ENCODE measurements at regions of chr1 and their contacts with region 1.

Region 1: DNA sequence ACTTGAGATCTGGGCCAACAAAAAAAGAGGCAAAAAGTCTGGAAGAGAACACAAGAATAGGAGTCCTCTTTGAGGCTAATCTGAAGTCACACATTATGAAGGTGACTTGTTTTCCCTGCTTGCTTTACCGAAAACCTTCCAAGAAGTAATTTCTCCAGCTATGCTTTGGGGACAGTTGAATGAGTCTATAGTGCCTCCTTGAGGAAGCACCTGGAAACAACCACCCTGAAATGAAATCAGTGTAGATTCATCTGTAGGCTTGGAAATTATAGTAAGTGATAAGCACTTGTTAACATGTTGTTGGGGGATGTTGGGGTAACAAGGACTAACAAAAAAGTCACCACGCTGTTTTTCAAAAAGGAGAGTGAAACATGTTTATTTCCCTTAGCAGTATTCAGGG is 23.4 kb upstream of the RPTN start:
- DNase-seq: no peak
- H3K4me3 ChIP-seq: no peak overlapping the region
- H3K4me3 Mint-ChIP-seq: no peak overlapping the region
- H3K27ac ChIP-seq: no peak overlapping the region
- H3K27ac Mint-ChIP-seq: no peak overlapping the region
- H3K4me1 ChIP-seq: no peaks in the 10 kb centered on the region
- H3K4me1 Mint-ChIP-seq: peaks cover 0 to 2% (median under 1%) of the 10 kb centered on the region in 4 donors
- H3K27me3 ChIP-seq: no peaks in the 10 kb centered on the region
- H3K27me3 Mint-ChIP-seq: peaks cover 0 to 6% of the 10 kb centered on the region in 2 donors

Region 2: GRCh38 chr1:151072224-151072623 is 1110.2 kb before region 1 on chr1:
- CTCF ChIA-PET with region 1: no interaction called
- POLR2A ChIA-PET with region 1: no interaction called
- intact Hi-C with region 1: no loop called
- DNase-seq: no peak
- H3K4me3 ChIP-seq: no peak overlapping the region
- H3K4me3 Mint-ChIP-seq: peak overlapping the region in 6 of 8 donors; percentile 95 to 100 (median 98)
- H3K27ac ChIP-seq: peak overlapping the region; percentile 97
- H3K27ac Mint-ChIP-seq: peak overlapping the region in 5 of 7 donors; percentile 10 to 100 (median 99)
- H3K4me1 ChIP-seq: peaks cover 17% of the 10 kb centered on the region
- H3K4me1 Mint-ChIP-seq: peaks cover 13 to 34% (median 25%) of the 10 kb centered on the region in 4 donors
- H3K27me3 ChIP-seq: no peaks in the 10 kb centered on the region
- H3K27me3 Mint-ChIP-seq: no peaks in the 10 kb centered on the region

Region 3: DNA sequence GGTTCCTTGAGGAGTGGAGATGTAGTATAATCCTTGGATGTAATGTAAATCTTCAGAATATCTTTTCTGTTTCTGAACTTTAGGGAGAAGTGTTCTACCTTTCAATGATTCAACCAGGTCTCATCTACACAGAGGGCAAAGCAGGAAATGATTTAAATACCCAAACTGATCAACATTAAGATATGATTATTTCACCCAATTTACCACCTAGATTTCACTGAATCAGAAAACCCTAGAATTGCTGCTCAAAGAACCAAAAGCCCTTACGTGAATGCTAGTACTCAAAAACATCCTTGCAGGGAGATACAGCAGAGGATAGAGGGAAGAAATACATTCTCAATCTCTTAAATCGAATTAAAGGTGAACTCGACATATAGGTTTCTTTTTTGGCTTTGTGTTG is 28.4 kb before region 1 on chr1:
- CTCF ChIA-PET with region 1: interaction called, 9 read pairs
- POLR2A ChIA-PET with region 1: no interaction called
- intact Hi-C with region 1: loop called (anchors 1 kb)
- DNase-seq: no peak
- H3K4me3 ChIP-seq: no peak overlapping the region
- H3K4me3 Mint-ChIP-seq: no peak overlapping the region
- H3K27ac ChIP-seq: no peak overlapping the region
- H3K27ac Mint-ChIP-seq: no peak overlapping the region
- H3K4me1 ChIP-seq: peaks cover 7% of the 10 kb centered on the region
- H3K4me1 Mint-ChIP-seq: peaks cover 9 to 24% (median 13%) of the 10 kb centered on the region in 4 donors
- H3K27me3 ChIP-seq: no peaks in the 10 kb centered on the region
- H3K27me3 Mint-ChIP-seq: peaks cover 3 to 4% of the 10 kb centered on the region in 2 donors

Measured in CD4-positive, alpha-beta memory T cell (primary cell).